Mammary epithelial cell (primary cell): ENCODE measurements at regions of chr1 and their contacts with region 1.

Region 1: DNA sequence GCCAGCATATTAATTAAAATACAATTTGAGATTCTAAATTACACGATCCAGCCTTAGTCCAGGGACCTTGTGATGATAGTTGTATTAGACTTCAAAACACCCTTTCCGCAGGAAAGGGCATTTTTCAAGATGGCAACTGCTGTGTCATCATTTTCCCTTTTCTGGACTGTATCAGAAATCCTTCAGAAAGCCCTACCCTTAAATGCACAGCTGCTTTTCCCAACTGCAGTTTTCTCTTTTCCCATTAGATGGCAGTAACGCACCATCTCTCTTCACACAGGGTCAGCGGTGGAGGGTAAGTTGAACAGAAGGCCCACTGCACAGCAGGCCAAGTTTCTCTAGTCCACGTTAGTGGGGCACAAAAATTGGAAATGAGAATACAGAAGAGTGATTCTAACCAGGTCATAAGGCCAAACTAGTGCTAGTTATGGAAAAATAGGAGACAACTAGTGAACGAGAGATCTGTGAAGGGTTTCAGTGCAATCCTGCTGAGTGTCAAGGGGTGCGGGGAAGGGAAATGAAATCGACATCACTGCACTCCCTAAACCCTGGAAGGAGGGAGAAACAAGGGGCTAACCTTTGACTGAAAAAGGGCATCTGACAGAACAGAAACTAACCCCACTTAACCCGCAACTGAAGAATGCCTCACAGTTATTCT is 22.1 kb upstream of the TDRD10 start:
- DNase-seq: peak; percentile 74
- H3K4me3 ChIP-seq: no peak overlapping the region
- H3K27ac ChIP-seq: no peak overlapping the region
- H3K4me1 ChIP-seq: peaks cover 11% of the 10 kb centered on the region
- H3K27me3 ChIP-seq: no peaks in the 10 kb centered on the region
- CTCF ChIP-seq: peak; percentile 96 to 98

Region 2: DNA sequence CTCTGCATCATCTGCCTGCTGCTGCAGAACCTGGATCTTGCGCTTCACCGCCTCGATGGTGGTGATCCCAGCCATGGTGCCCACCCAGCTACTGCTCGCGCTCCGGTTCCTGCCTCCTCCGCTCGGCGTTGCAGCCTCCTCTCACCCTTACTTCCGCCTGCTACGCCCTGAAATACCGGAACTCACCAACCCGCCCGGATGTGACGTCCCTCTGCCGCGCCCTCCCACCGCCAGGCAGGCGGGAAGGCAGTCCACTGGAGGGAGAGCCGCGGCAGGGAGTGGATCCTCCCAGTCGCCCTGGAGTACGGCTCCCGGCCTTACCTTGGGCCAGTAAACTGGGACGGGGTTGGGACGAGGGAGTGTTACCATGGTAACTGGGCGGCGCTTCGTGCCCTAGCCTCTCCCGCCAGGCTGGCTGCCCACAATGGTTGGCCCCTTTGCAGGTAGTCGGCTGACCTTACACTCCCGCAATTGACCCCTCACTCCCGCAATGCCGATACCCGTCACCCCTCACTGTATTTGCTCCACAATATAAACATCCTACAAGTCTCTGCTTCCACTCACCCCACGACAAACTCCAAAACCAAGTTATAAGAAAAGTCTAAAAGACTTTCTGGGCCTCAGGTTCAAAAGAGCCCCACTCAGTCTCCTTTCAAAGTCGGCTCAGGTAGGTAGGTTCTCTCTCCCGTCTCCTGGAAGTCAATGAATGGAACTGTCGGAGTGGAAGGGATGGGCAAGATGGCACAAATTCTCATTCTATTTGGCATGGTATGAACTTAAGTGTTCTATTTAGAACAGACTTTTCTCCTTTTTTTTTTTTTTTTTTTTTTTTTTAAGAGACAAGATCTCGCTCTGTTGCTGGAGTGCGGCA is 296.6 kb before region 1 on chr1:
- CTCF ChIA-PET with region 1: no interaction called
- dilution Hi-C with region 1: no loop called
- in situ Hi-C with region 1: no loop called
- intact Hi-C with region 1: loop called (anchors 2 kb)
- DNase-seq: peak; percentile 99
- H3K4me3 ChIP-seq: peak overlapping the region; percentile 85 to 96 (median 91)
- H3K27ac ChIP-seq: peak overlapping the region; percentile 94
- H3K4me1 ChIP-seq: peaks cover 34% of the 10 kb centered on the region
- H3K27me3 ChIP-seq: no peaks in the 10 kb centered on the region
- CTCF ChIP-seq: peak in 1 of 2 donors; percentile 10

Region 3: DNA sequence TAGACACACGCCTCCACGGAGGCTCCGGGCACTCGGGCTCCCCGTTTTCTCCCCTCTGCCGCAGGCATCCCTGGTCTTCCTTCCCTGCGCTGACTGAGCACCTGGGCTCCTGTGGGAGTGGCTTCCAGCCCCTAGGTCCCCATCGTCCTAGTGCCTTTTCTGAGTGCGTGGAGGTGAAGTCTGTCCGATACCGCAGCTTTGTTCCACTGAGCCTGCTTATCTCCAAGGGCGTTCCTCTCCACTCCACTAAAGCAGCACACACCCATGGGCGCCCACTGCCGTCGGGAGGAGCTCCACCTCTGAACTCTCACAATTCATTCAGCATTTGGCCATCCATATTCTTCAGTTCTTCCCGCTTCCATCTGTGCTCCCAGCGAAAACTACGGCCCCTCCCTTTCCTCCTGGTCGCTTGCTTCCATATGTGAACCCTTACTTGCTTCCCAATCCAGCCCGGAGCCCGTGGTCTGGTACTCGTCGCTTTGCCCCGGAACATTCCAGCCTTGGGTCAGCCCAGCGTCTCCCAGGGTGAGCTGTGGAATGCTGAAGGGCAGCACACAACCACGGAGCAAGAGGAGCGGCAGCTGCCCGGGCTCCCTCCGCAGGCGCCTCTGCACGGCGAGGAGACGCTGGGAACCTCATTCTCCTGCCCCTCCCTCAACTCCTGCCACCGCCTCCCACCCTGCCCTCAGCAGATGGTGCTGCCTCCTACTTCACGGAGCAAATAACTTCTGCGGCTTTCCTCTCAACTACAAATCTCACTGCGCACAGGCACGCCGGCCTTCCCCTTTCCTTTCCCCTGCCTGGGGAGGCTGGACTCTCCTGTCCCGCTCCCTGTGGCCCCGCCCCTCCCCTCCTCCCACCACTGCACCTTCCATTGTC is 127.1 kb before region 1 on chr1:
- CTCF ChIA-PET with region 1: no interaction called
- dilution Hi-C with region 1: no loop called
- in situ Hi-C with region 1: no loop called
- intact Hi-C with region 1: loop called (anchors 2 kb)
- DNase-seq: peak; percentile 9
- H3K4me3 ChIP-seq: peak overlapping the region; percentile 0 to 36 (median 33)
- H3K27ac ChIP-seq: no peak overlapping the region
- H3K4me1 ChIP-seq: peaks cover 15% of the 10 kb centered on the region
- H3K27me3 ChIP-seq: no peaks in the 10 kb centered on the region
- CTCF ChIP-seq: no peak

Region 4: GRCh38 chr1:154533952-154534844 is 54.3 kb after region 1 on chr1:
- CTCF ChIA-PET with region 1: interaction called, 5 read pairs
- dilution Hi-C with region 1: loop called (anchors 5 kb)
- in situ Hi-C with region 1: no loop called
- intact Hi-C with region 1: loop called (anchors 1 kb)
- DNase-seq: peak; percentile 44
- H3K4me3 ChIP-seq: no peak overlapping the region
- H3K27ac ChIP-seq: no peak overlapping the region
- H3K4me1 ChIP-seq: no peaks in the 10 kb centered on the region
- H3K27me3 ChIP-seq: no peaks in the 10 kb centered on the region
- CTCF ChIP-seq: peak; percentile 86 to 88

Region 5: DNA sequence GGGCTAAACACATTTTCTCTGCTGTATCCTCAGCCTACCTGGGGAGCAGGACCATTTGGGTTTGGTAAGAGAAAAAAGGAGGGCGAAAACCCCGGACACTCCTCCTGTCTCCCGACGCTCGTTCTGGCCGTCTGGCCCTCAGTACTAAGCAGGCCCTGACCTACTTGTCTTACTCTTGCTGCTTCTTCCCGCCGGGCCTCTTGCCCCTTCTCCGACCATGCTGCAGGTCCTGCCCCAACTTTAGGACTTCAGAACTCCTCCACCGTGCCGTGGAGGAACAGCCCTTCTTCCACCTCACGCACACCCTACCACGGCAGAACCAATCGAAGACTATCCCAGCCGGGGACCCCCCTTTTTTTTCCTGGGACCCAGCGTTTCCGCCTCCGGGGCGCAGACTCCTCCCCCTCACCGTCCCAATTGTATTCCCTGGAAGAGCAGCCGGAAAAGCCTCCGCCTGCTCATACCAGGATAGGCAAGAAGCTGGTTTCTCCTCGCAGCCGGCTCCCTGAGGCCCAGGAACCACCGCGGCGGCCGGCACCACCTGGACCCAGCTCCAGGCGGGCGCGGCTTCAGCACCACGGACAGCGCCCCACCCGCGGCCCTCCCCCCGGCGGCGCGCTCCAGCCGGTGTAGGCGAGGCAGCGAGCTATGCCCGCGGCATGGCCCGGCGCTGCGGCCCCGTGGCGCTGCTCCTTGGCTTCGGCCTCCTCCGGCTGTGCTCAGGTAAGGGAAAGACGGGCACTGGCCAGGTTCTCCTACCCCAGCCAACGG is 87.7 kb after region 1 on chr1 and contains the start of gene CHRNB2:
- CTCF ChIA-PET with region 1: no interaction called
- dilution Hi-C with region 1: loop called (anchors 5 kb)
- in situ Hi-C with region 1: no loop called
- intact Hi-C with region 1: no loop called
- DNase-seq: peak; percentile 56
- H3K4me3 ChIP-seq: peak within 1 kb of the TSS in 2 of 3 experiments; percentile 16 to 37
- H3K27ac ChIP-seq: no peak within 1 kb of the TSS
- H3K4me1 ChIP-seq: peaks cover 3% of the 10 kb centered on the region
- H3K27me3 ChIP-seq: no peaks in the 10 kb centered on the region
- CTCF ChIP-seq: no peak
- total RNA-seq, gene CHRNB2: 0.17 to 0.19 TPM

Region 6: GRCh38 chr1:154760469-154760933 is 280.6 kb after region 1 on chr1:
- CTCF ChIA-PET with region 1: no interaction called
- dilution Hi-C with region 1: no loop called
- in situ Hi-C with region 1: no loop called
- intact Hi-C with region 1: loop called (anchors 1 kb)
- DNase-seq: peak; percentile 30
- H3K4me3 ChIP-seq: peak overlapping the region; percentile 32 to 37 (median 33)
- H3K27ac ChIP-seq: no peak overlapping the region
- H3K4me1 ChIP-seq: peaks cover 8% of the 10 kb centered on the region
- H3K27me3 ChIP-seq: no peaks in the 10 kb centered on the region
- CTCF ChIP-seq: peak; percentile 39 to 68

Region 7: DNA sequence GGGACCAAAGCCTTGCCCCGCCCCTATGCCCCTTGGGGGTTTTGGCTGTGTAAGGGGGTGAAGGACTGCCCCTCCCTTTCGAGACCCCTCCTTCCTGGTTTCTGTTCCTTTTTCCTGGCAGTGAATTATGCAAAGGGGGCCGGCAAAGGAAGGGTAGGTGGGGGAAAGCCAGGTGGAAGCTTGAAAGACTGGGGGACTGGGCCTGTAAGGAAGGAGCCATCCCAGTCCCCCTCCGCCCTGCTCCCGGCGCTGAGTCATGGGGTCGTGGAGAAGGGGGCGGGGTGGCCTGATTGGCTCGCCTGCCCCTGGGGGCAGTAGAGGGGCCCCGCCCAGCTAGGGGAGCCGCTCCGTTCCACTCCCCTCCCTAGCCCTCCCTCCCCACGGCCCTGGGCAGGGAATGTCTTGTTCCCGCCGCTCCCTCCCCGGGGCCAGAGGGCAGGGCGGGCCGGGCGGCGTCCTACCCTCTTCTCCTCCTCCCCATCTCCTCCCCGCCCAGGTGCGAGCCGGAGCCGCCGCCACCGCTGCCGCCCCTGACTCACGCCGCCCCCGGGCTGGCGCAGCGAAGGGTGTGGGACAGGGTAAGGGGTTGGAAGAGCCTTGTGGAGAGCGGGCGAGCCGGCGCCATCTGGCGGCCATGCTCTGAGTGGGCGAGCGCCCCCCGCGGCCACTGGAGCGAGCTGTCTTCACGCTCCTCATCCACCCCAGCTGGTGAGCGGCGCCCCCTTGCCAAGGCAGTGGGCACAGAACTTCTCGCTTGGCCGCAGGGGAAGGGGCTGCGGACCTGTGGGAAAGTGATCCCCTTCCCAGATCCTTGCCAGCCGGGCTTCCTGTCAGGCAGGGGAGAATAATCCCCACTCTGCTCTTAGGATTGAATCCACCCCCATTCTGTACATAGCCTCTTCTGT is 537.4 kb after region 1 on chr1:
- CTCF ChIA-PET with region 1: no interaction called
- dilution Hi-C with region 1: no loop called
- in situ Hi-C with region 1: no loop called
- intact Hi-C with region 1: loop called (anchors 5 kb)
- DNase-seq: peak; percentile 99
- H3K4me3 ChIP-seq: peak overlapping the region in 2 of 3 experiments; percentile 12 to 31
- H3K27ac ChIP-seq: peak overlapping the region; percentile 50
- H3K4me1 ChIP-seq: peaks cover 23% of the 10 kb centered on the region
- H3K27me3 ChIP-seq: no peaks in the 10 kb centered on the region
- CTCF ChIP-seq: peak; percentile 97 to 100